A549 (cell line): ENCODE measurements at regions of chr9 and their contacts with region 1.

Region 1: DNA sequence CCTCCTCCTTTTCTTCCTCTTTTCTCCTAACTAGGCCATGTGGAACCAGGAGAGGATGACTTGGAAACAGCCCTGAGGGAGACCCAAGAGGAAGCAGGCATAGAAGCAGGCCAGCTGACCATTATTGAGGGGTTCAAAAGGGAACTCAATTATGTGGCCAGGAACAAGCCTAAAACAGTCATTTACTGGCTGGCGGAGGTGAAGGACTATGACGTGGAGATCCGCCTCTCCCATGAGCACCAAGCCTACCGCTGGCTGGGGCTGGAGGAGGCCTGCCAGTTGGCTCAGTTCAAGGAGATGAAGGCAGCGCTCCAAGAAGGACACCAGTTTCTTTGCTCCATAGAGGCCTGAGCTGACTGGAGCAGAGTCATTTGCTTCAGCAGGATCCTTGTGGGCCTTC is 13.7 kb downstream of the NUDT2 start:
- DNase-seq: no peak
- ATAC-seq: no peak
- H3K4me3 ChIP-seq: no peak overlapping the region
- H3K27ac ChIP-seq: no peak overlapping the region
- H3K4me1 ChIP-seq: no peaks in the 10 kb centered on the region
- CTCF ChIP-seq: no peak
- EP300 ChIP-seq: no peak
- POLR2A ChIP-seq: no peak
- RAD21 ChIP-seq: no peak

Region 2: DNA sequence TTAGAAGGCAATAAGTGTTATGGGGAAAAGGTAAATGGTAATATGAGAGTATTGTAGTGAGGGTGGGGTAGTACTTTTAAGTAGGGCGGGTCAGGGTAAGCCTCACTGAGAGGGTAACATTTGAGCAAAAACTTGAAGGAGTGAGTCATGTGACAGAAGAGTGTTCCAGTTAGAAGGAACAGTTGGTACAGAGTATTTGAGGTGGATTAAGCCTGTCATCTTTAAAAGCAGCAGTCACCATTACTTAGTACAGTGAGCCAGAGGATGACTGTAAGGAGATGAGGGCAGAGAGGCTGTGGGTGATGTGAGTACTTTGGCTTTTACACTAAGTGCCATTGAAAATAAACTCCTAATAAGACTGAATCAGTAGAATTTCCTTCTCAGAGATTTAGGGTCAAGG is 109.4 kb before region 1 on chr9:
- CTCF ChIA-PET with region 1: no interaction called
- POLR2A ChIA-PET with region 1: no interaction called
- DNase-seq: no peak
- ATAC-seq: 0 out of 6 replicates have a peak, but pooled peaks of 1 of the 2 experiments have one; percentile 30
- H3K4me3 ChIP-seq: no peak overlapping the region
- H3K27ac ChIP-seq: no peak overlapping the region; a peak in 1 of 6 replicates
- H3K4me1 ChIP-seq: no peaks in the 10 kb centered on the region
- CTCF ChIP-seq: no peak
- EP300 ChIP-seq: no peak
- POLR2A ChIP-seq: no peak
- RAD21 ChIP-seq: no peak

Region 3: GRCh38 chr9:34259315-34259714 is 83.8 kb before region 1 on chr9:
- CTCF ChIA-PET with region 1: no interaction called
- POLR2A ChIA-PET with region 1: no interaction called
- DNase-seq: no peak
- ATAC-seq: no peak
- H3K4me3 ChIP-seq: no peak overlapping the region
- H3K27ac ChIP-seq: no peak overlapping the region
- H3K4me1 ChIP-seq: peaks cover 16% of the 10 kb centered on the region
- CTCF ChIP-seq: no peak
- EP300 ChIP-seq: no peak
- POLR2A ChIP-seq: no peak
- RAD21 ChIP-seq: no peak

Region 4: DNA sequence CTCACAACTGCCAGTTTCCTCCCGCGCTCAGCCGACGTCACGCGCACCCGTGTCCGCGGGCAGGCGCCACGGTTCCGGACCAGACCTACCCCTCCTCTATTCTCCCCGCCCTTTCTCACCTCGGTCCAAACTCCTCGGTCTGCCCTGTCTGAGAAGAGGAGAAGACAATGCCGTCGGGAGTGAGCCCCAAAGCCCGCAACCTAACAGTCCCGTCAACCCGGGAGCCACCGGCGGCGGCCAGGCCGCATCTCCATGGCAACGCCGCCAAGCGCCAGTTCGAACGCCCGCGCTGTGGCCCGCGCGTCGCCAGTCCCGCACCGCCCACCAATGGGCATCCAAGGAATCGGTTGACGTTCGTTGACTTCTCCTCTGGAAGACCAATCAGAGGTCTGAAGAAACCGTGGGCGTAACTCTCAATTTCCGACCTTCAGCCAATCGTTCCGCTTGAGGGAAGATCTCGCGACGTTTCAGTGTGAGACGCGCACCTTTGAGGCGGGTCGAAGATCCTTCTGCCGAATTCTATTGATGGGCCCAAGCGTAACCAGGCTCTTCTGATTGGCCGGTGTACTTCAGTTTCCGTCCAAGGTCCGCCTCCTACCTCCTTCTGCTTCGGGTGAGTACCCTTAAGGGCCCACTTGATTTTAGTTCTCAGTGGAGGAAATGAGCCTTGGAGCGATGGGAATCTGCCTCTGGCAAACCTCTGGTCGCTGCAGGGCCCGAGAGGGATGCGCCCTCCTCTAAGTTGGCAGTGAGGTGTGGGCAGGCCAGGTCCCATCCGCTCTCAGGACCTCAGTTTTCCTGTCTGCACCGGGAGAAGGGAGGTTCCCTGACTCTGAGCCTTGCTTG is 13.9 kb before region 1 on chr9 and contains the starts of genes KIF24 and NUDT2:
- CTCF ChIA-PET with region 1: interaction called, 51 read pairs
- POLR2A ChIA-PET with region 1: no interaction called
- DNase-seq: peak; percentile 96 to 100
- ATAC-seq: peak; percentile 94 to 97
- H3K4me3 ChIP-seq: peak within 1 kb of the TSS; percentile 97
- H3K27ac ChIP-seq: peak within 1 kb of the TSS; percentile 92 to 95
- H3K4me1 ChIP-seq: peaks cover 20% of the 10 kb centered on the region
- CTCF ChIP-seq: no peak
- EP300 ChIP-seq: no peak
- POLR2A ChIP-seq: peak; percentile 77
- RAD21 ChIP-seq: no peak
- polyA plus RNA-seq, gene KIF24: 4.3 and 4.4 TPM in 2 replicates
- polyA plus RNA-seq, gene NUDT2: 26.4 and 26.8 TPM in 2 replicates